ENCODE measurements at regions of chr1 and their contacts with region 1.

Region 1: DNA sequence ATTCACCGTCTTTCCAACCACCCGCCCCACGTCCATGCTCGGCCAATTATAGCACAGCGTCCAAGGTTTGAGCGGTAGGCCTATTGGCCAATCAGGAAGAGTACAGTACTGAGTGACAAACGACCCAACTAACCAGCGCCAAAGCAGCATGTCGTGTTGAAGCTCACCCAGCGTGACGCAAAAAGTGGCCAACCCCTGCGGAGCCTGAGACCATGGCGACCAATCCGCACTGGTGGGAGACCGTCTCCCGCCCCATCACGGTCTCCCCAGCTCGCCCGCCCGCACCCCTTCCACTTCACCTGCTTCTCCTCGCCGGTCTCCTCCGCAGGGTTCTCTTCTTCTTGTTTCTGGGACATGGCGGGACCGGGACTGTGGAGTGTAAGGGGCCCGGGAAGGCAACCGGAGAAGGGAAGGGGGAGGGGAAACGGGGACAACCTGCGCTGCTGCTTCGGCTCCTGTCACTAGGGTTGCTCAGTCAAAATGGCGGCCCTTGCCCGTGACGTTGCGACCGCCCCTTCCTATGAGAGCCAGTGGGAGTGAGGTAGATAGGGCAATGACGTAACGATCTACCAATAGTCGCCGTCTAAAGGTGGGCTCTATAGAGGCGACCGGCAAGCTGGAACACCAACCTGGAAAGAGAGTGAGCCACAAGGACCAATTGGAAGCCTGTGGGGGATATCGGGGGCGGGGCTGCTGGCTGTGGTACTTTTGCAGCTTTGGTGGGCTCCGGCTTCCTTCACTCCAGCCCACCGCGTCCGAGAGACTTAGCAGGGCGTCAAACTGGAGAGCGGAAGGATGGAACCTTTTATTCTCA is at the start of gene ENSA:
- DNase-seq: peak; percentile 99
- H3K4me3 ChIP-seq: peak within 1 kb of the TSS; percentile 64
- H3K27ac ChIP-seq: peak within 1 kb of the TSS; percentile 98
- H3K4me1 ChIP-seq: peaks cover 10% of the 10 kb centered on the region
- H3K27me3 ChIP-seq: no peaks in the 10 kb centered on the region
- CTCF ChIP-seq: no peak
- total RNA-seq, gene ENSA: 222 and 237 TPM in 2 replicates

Region 2: DNA sequence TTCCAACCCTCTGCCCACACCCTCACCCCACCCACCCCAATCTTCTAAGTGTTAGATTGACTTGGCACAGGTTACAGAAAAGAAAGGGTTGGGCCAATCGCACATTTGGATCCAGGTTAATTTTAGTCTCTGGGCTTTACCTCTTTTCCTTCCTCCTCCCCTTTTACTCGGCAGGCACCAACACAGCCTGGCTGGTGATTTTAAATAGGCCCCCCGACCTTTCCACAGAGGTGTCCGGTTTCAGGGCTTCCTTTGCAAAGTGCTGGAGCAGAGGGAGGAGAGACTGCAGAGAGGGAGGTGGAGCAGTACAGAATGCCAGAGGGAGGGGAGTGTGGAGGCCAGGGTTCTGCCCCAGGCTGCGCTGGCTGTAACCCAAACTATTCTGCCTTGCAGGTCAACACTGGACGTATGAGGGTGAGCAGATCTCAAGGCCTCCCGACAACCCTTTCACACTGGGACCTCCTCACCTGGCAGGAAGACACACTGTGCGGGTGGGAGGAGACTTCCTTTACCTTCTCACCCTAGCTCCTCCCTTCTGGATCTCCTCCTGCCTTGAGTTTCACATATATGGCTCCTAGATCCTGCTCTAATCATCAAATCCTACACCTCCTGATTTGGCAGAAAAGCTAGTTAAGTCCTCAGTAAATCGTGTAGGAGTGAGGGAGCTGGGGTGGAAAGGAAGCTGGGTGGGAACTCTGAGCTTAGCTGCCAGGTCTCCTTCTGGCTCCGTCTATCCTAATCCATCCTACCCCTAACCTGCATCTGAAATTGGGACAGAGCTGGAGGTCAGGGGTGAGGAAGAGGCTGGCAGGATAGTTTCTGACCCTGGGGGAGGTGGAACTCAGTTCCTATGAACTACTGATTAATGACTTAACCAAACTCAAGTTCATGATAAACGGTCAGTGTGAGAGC is 369.3 kb before region 1 on chr1:
- CTCF ChIA-PET with region 1: no interaction called
- POLR2A ChIA-PET with region 1: no interaction called
- intact Hi-C with region 1: loop called (anchors 10 kb)
- DNase-seq: peak; percentile 33
- H3K4me3 ChIP-seq: no peak overlapping the region
- H3K27ac ChIP-seq: no peak overlapping the region
- H3K4me1 ChIP-seq: peaks cover 47% of the 10 kb centered on the region
- H3K27me3 ChIP-seq: no peaks in the 10 kb centered on the region
- CTCF ChIP-seq: no peak

Region 3: DNA sequence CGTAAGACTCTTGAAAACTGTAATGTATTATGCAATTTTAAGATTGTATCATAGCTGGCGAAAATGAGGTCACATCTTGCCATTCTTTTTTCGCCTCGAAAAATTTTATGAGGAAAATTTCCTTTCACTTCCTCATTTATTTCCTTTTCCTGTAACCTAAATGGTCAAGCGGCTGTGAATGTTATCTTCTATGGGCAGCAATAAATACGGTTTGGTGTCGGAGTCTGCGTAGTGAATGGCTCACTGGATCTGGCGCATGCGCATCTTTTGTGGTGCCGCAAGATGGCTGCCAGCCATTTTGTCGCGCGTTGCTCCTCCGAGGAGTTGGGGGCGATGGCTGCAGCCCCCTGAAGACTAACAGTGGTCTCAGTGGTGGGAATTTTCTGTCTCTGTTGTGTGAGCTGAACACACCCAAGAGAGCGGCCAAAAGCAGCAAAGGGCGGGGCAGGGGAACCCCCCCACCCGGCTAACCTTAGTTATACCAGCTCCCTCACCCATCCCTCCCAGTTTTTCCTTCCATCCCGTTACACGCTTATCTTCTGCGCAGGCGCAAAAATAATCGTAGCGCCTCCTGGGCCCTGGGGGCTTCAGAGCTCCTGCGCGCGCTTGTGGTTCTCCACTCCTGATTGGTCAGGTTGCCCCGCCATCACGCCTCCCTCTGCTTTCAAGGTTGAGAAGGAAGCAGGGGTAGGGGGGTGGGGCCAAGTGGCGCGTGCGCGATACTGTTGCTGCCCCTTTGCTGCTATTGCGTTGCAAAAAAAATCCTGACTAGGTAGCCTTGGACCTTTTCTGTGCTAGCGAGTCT is 265.7 kb before region 1 on chr1 and contains the start of gene RPRD2:
- CTCF ChIA-PET with region 1: no interaction called
- POLR2A ChIA-PET with region 1: no interaction called
- intact Hi-C with region 1: loop called (anchors 1 kb)
- DNase-seq: peak; percentile 100
- H3K4me3 ChIP-seq: peak within 1 kb of the TSS; percentile 75
- H3K27ac ChIP-seq: peak within 1 kb of the TSS; percentile 97
- H3K4me1 ChIP-seq: peaks cover 15% of the 10 kb centered on the region
- H3K27me3 ChIP-seq: no peaks in the 10 kb centered on the region
- CTCF ChIP-seq: no peak
- total RNA-seq, gene RPRD2: 44.5 and 46.6 TPM in 2 replicates

Region 4: GRCh38 chr1:150464422-150464826 is 164.9 kb before region 1 on chr1:
- CTCF ChIA-PET with region 1: no interaction called
- POLR2A ChIA-PET with region 1: no interaction called
- intact Hi-C with region 1: loop called (anchors 10 kb)
- DNase-seq: peak; percentile 68
- H3K4me3 ChIP-seq: no peak overlapping the region
- H3K27ac ChIP-seq: no peak overlapping the region
- H3K4me1 ChIP-seq: no peaks in the 10 kb centered on the region
- H3K27me3 ChIP-seq: no peaks in the 10 kb centered on the region
- CTCF ChIP-seq: peak; percentile 74

Region 5: GRCh38 chr1:150578965-150579798 is 50.1 kb before region 1 on chr1 and contains the start of gene MCL1:
- CTCF ChIA-PET with region 1: interaction called, 3 read pairs
- POLR2A ChIA-PET with region 1: interaction called, 13 read pairs
- intact Hi-C with region 1: loop called (anchors 2 kb)
- DNase-seq: peak; percentile 97
- H3K4me3 ChIP-seq: peak within 1 kb of the TSS; percentile 90
- H3K27ac ChIP-seq: peak within 1 kb of the TSS; percentile 98
- H3K4me1 ChIP-seq: peaks cover 26% of the 10 kb centered on the region
- H3K27me3 ChIP-seq: no peaks in the 10 kb centered on the region
- CTCF ChIP-seq: no peak
- total RNA-seq, gene MCL1: 123 and 163 TPM in 2 replicates

Region 6: GRCh38 chr1:150696590-150697524 is 67.5 kb after region 1 on chr1 and contains the start of gene GOLPH3L:
- CTCF ChIA-PET with region 1: no interaction called
- POLR2A ChIA-PET with region 1: no interaction called
- intact Hi-C with region 1: loop called (anchors 2 kb)
- DNase-seq: peak; percentile 99
- H3K4me3 ChIP-seq: peak within 1 kb of the TSS; percentile 67
- H3K27ac ChIP-seq: no peak within 1 kb of the TSS
- H3K4me1 ChIP-seq: peaks cover 12% of the 10 kb centered on the region
- H3K27me3 ChIP-seq: no peaks in the 10 kb centered on the region
- CTCF ChIP-seq: no peak
- total RNA-seq, gene GOLPH3L: 22.6 and 26.7 TPM in 2 replicates

Region 7: GRCh38 chr1:150925816-150926741 is 296.8 kb after region 1 on chr1 and contains the start of gene SETDB1:
- CTCF ChIA-PET with region 1: interaction called, 3 read pairs
- POLR2A ChIA-PET with region 1: no interaction called
- intact Hi-C with region 1: loop called (anchors 10 kb)
- DNase-seq: peak; percentile 99
- H3K4me3 ChIP-seq: peak within 1 kb of the TSS; percentile 70
- H3K27ac ChIP-seq: peak within 1 kb of the TSS; percentile 91
- H3K4me1 ChIP-seq: peaks cover 5% of the 10 kb centered on the region
- H3K27me3 ChIP-seq: no peaks in the 10 kb centered on the region
- CTCF ChIP-seq: no peak; the same call in 1 of the 2 replicates
- total RNA-seq, gene SETDB1: 66.5 and 71.0 TPM in 2 replicates

Region 8: DNA sequence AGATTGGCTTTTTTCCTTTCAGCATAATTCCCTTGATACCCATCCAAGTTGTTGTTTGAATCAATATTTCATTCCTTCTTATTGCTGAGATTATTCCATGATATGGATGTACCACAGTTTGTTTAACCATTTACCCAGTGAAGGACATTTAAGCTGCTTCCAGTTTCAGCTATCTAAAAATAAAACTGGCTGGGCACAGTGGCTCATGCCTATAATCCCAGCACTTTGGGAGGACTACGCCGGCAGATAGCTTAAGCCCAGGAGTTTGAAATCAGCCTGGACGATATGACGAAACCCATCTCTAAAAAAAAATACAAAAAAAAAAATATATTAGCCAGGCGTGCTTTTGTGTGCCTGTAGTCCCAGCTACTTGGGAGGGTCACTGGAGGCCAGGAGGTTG is 484.6 kb after region 1 on chr1:
- CTCF ChIA-PET with region 1: no interaction called
- POLR2A ChIA-PET with region 1: no interaction called
- intact Hi-C with region 1: no loop called
- DNase-seq: no peak
- H3K4me3 ChIP-seq: no peak overlapping the region
- H3K27ac ChIP-seq: no peak overlapping the region
- H3K4me1 ChIP-seq: no peaks in the 10 kb centered on the region
- H3K27me3 ChIP-seq: no peaks in the 10 kb centered on the region
- CTCF ChIP-seq: no peak